ENCODE measurements at regions of chr3 and their contacts with region 1.

Region 1: GRCh38 chr3:170307671-170308403 is 49.7 kb upstream of the SKIL start:
- DNase-seq: no peak
- H3K4me3 ChIP-seq: no peak overlapping the region
- H3K27ac ChIP-seq: no peak overlapping the region
- H3K4me1 ChIP-seq: peaks cover 0 to 5% (median 2%) of the 10 kb centered on the region in 4 donors
- H3K27me3 ChIP-seq: no peaks in the 10 kb centered on the region
- CTCF ChIP-seq: no peak
- EP300 ChIP-seq: no peak
- POLR2A ChIP-seq: no peak

Region 2: DNA sequence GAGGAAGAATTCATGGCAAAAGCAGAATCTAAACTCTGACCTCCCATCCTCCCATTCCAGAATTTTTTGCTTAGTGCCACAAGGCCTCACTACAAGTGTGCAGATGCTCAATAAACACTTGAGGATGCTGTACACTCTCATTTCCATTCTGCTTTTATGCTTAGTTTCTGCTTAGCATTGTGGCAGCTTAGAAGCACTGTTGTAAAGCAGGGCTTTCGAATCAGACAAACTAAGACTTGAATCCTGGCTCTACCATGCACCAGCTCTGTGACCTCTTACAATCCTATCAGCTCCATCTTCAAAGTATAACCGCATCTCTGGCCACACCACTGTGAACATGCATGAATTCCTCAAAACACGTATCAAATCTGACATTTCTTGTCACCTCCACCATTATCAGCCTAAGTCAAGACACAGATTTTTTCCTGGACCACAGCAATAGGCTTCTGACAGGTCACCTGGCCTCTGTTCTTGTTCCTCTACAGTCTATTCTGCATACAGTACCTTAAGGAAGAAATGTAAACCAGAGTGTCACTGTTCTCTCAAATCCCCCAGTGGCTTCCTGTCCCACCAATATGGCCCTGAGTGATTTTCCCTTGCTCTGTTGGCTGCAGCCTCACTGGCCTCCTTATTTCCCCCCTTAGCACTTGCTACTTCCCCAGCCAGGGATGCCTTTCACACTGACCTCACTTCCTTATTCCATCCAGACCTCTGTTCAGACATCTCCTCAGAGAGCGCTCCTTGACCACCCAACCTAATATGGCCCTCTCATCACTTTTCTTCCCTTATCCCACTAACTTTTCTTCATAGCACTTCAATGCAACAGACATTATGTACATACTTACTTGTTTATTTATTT is 118.2 kb before region 1 on chr3:
- intact Hi-C with region 1: loop called (anchors 5 kb)
- DNase-seq: peak; percentile 57
- H3K4me3 ChIP-seq: no peak overlapping the region
- H3K27ac ChIP-seq: no peak overlapping the region
- H3K4me1 ChIP-seq: peaks cover 0 to 11% (median 9%) of the 10 kb centered on the region in 4 donors
- H3K27me3 ChIP-seq: no peaks in the 10 kb centered on the region
- CTCF ChIP-seq: no peak
- EP300 ChIP-seq: no peak
- POLR2A ChIP-seq: no peak

Region 3: DNA sequence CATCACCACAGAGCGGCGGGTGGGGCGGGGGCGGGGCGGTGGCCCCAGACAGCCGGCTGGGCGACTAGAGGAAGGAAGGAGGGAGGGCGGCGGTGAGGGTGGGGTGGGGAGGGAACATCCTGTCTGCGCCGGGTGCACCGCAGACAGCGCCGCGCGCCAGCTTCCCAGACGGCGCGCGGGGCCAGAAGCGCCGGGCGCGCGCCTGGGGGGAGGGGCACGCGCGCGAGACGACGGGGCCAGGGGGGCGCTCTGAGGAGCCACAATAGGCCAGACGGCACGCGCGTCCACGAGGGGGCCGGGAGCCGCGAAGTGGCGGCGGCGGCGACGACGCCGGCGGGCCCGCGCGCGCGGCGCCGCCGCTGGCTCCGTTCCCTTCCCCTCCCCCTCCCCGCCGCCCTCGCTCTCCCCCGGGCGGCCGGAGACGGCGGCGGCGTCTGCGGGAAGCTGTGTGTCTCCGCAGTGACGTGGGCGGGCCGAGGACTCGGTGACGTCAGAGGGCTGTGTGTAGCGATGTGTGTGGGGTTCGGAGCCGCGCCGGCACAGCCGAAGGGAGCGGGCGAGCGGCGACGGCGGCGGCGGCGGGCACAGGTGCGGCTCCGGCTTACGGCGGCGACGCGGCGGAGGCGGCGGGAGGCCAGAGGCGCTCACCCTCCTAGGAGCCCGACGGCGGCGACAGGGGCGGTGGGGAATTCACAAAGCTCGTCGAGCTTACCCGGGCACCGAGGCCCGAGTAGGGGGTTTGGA is 49.5 kb after region 1 on chr3 and contains the start of gene SKIL:
- intact Hi-C with region 1: loop called (anchors 5 kb)
- DNase-seq: peak; percentile 99
- H3K4me3 ChIP-seq: peak within 1 kb of the TSS; percentile 77 to 96 (median 96)
- H3K27ac ChIP-seq: peak within 1 kb of the TSS; percentile 97 to 100 (median 98)
- H3K4me1 ChIP-seq: peaks cover 22 to 55% (median 51%) of the 10 kb centered on the region in 4 donors
- H3K27me3 ChIP-seq: no peaks in the 10 kb centered on the region
- CTCF ChIP-seq: peak in 1 of 3 experiments; percentile 8
- EP300 ChIP-seq: peak; percentile 14
- POLR2A ChIP-seq: no peak
- total RNA-seq, gene SKIL: 34.7 to 54.4 (median 39.5) TPM

Measured in esophagus muscularis mucosa (tissue), 4 donors.